MCF 10A (cell line): ENCODE measurements at regions of chr2 and their contacts with region 1.

Region 1: GRCh38 chr2:224885836-224886547 is 156.3 kb downstream of the DOCK10 start:
- DNase-seq: peak; percentile 86
- H3K4me3 Mint-ChIP-seq: peak overlapping the region; percentile 26
- H3K27ac Mint-ChIP-seq: peak overlapping the region; percentile 84
- H3K4me1 Mint-ChIP-seq: peaks cover 48% of the 10 kb centered on the region
- H3K27me3 Mint-ChIP-seq: no peaks in the 10 kb centered on the region
- CTCF ChIP-seq: no peak

Region 2: GRCh38 chr2:224802407-224802806 is 83.6 kb before region 1 on chr2:
- CTCF ChIA-PET with region 1: no interaction called
- POLR2A ChIA-PET with region 1: no interaction called
- intact Hi-C with region 1: no loop called
- DNase-seq: peak; percentile 3
- H3K4me3 Mint-ChIP-seq: no peak overlapping the region
- H3K27ac Mint-ChIP-seq: no peak overlapping the region
- H3K4me1 Mint-ChIP-seq: peaks cover 10% of the 10 kb centered on the region
- H3K27me3 Mint-ChIP-seq: no peaks in the 10 kb centered on the region
- CTCF ChIP-seq: no peak

Region 3: GRCh38 chr2:224847961-224848850 is 37.8 kb before region 1 on chr2:
- CTCF ChIA-PET with region 1: interaction called, 4 read pairs
- POLR2A ChIA-PET with region 1: interaction called, 23 read pairs
- intact Hi-C with region 1: no loop called
- DNase-seq: peak; percentile 98
- H3K4me3 Mint-ChIP-seq: no peak overlapping the region
- H3K27ac Mint-ChIP-seq: no peak overlapping the region
- H3K4me1 Mint-ChIP-seq: peaks cover 19% of the 10 kb centered on the region
- H3K27me3 Mint-ChIP-seq: no peaks in the 10 kb centered on the region
- CTCF ChIP-seq: no peak

Region 4: DNA sequence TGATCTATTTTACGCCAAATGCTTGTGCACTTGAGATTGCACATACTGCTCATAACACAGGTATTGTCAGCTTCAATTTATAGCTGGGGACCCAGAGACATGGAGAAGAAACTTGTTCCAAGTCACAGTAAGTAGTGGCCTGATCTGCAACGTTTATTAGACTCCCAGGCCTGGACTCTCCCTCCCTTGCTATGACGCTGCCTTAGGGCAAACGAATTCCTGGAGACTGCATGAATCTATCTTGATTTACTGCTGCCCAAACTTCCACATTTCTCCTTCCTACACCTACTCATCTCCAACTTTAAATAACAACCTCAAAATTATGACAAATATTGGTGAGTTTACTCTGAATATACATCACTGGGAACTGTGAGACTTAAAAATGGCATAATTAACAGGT is 24.7 kb before region 1 on chr2:
- CTCF ChIA-PET with region 1: interaction called, 3 read pairs
- POLR2A ChIA-PET with region 1: interaction called, 18 read pairs
- intact Hi-C with region 1: no loop called
- DNase-seq: peak; percentile 53
- H3K4me3 Mint-ChIP-seq: no peak overlapping the region
- H3K27ac Mint-ChIP-seq: peak overlapping the region; percentile 35
- H3K4me1 Mint-ChIP-seq: peaks cover 7% of the 10 kb centered on the region
- H3K27me3 Mint-ChIP-seq: no peaks in the 10 kb centered on the region
- CTCF ChIP-seq: no peak

Region 5: GRCh38 chr2:224869601-224870233 is 16.3 kb before region 1 on chr2:
- CTCF ChIA-PET with region 1: interaction called, 4 read pairs
- POLR2A ChIA-PET with region 1: interaction called, 17 read pairs
- intact Hi-C with region 1: no loop called
- DNase-seq: peak; percentile 82
- H3K4me3 Mint-ChIP-seq: no peak overlapping the region
- H3K27ac Mint-ChIP-seq: peak overlapping the region; percentile 28
- H3K4me1 Mint-ChIP-seq: peaks cover 20% of the 10 kb centered on the region
- H3K27me3 Mint-ChIP-seq: no peaks in the 10 kb centered on the region
- CTCF ChIP-seq: no peak

Region 6: GRCh38 chr2:224909885-224910573 is 24.0 kb after region 1 on chr2:
- CTCF ChIA-PET with region 1: interaction called, 5 read pairs
- POLR2A ChIA-PET with region 1: interaction called, 67 read pairs
- intact Hi-C with region 1: no loop called
- DNase-seq: peak; percentile 97
- H3K4me3 Mint-ChIP-seq: no peak overlapping the region
- H3K27ac Mint-ChIP-seq: peak overlapping the region; percentile 91
- H3K4me1 Mint-ChIP-seq: peaks cover 18% of the 10 kb centered on the region
- H3K27me3 Mint-ChIP-seq: no peaks in the 10 kb centered on the region
- CTCF ChIP-seq: no peak

Region 7: DNA sequence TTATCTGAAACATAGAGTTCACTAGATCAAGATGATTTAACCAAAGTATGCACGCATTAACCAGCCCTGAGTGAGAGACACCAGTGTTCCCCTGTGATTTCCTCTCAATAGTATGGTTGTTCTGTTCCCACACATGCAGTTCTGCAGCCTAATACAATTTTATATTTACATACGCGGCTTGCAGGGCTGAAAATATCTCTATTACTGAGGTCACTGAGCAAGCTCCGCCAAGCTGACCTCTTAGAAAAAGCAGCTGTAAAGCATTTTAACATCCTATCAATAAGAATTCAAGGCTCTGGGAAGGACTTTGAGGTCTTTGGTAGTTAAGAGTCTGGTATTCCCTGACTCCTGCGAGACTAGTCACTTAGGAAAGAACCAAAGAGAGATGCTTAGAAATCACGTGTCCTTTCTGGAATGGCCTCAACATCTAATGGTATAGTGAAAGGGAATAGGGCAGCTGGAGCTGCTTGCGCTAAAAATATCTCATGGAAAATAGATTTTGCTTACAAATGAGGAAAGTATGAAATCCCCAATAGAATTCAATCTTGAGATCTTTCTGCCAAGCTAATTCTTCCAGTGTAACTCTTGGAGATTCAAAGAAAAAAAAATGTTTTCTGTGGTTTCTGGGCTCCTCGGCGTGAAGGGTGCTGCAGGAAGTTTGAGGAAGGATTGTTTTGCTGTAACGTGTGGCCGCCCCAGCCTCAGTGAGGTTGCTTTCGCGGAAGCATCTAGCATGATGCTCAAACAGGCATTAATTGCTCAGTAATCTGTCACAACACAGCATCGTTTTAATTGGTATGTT is 97.1 kb after region 1 on chr2:
- CTCF ChIA-PET with region 1: no interaction called
- POLR2A ChIA-PET with region 1: no interaction called
- intact Hi-C with region 1: no loop called
- DNase-seq: no peak
- H3K4me3 Mint-ChIP-seq: no peak overlapping the region
- H3K27ac Mint-ChIP-seq: no peak overlapping the region
- H3K4me1 Mint-ChIP-seq: no peaks in the 10 kb centered on the region
- H3K27me3 Mint-ChIP-seq: no peaks in the 10 kb centered on the region
- CTCF ChIP-seq: no peak